ENCODE measurements at regions of chr2 and their contacts with region 1.

Region 1: GRCh38 chr2:64330281-64331113 is 123.5 kb upstream of the LGALSL start:
- DNase-seq: peak; percentile 80
- H3K4me3 Mint-ChIP-seq: no peak overlapping the region
- H3K27ac Mint-ChIP-seq: no peak overlapping the region
- H3K4me1 Mint-ChIP-seq: peaks cover 52% of the 10 kb centered on the region
- H3K27me3 Mint-ChIP-seq: peaks cover 5% of the 10 kb centered on the region

Region 2: DNA sequence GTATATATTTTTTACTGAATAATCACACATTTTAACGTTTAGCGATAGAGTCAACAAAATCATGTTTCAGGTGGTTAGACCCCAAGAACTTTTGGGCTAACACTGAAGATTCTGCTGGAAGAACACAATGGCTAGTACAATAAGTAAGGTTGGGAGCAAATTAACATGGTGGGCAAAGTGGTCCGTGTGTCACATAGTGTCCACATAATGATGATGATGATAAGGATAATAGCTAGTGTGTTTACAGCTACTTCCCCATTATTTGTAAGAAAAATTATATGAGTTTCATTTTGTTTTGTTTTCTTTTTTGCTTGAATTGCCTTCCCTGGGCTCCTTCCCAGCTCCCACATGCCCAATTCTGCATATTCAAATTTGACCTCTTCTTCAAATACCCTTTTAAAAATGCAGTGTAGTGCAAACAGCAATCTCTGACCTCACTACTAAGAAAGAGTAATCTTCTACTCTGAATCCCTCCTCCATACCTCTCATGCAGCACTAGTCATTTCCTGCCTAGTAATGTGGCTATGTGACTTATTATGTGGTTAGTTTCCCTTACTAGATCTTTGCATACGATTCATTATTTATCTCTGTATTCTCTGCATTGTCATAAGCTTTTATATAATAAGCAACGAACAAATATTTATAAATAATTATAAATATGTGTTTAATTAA is 294.3 kb before region 1 on chr2:
- CTCF ChIA-PET with region 1: interaction called, 6 read pairs
- POLR2A ChIA-PET with region 1: interaction called, 15 read pairs
- DNase-seq: peak; percentile 25
- H3K4me3 Mint-ChIP-seq: peak overlapping the region; percentile 44
- H3K27ac Mint-ChIP-seq: peak overlapping the region; percentile 92
- H3K4me1 Mint-ChIP-seq: peaks cover 54% of the 10 kb centered on the region
- H3K27me3 Mint-ChIP-seq: no peaks in the 10 kb centered on the region

Region 3: DNA sequence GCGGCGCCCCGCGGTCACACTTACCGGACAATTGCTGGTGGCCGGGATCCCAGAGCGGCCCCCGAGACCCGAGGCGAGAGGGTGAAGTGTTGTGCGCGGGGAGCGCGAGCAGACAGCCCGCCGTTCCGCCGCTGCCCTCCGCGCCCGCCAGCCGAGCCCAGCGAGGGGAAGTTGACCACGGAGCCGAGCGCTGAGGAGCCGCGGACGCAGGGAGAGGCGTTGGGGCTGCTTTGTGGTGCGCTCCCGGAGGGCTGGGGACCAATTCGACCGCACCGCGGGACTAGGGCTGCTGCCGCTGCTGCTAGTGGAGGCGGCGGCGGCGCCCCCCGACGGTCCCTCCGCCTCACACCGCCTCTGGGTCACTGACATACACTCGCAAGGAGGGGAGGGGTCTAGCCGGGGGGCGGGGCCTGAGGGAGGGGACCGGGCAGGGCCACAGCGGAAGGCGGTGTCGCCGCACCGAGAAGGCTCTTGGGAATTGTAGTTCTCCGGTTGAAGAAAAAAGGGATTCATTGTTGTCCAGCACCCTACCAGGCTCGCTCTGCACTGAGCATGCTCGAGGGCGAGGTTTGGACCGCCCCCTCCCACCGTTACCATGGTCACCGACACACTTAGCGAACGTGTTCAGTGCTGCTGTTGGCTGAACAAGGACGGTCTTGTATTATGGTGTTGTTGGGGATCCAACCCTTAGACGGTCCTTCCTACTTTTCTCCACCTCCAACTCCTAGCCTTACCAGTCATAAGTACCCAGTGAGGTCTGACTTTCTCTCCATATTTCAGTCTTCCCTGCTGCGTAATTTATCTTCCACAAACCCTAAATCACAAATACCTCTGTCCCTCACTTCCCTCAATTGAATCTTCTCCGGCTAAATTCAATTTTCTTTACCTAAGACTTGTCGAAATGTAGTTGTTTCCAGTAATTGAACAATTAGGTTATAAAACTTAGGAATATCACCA is 186.2 kb before region 1 on chr2 and contains the start of gene PELI1:
- CTCF ChIA-PET with region 1: interaction called, 11 read pairs
- POLR2A ChIA-PET with region 1: interaction called, 51 read pairs
- DNase-seq: peak; percentile 96
- H3K4me3 Mint-ChIP-seq: peak within 1 kb of the TSS; percentile 91
- H3K27ac Mint-ChIP-seq: peak within 1 kb of the TSS; percentile 88
- H3K4me1 Mint-ChIP-seq: peaks cover 24% of the 10 kb centered on the region
- H3K27me3 Mint-ChIP-seq: no peaks in the 10 kb centered on the region
- total RNA-seq, gene PELI1: 44.9 to 45.0 TPM

Region 4: GRCh38 chr2:64273524-64274398 is 56.7 kb before region 1 on chr2:
- CTCF ChIA-PET with region 1: no interaction called
- POLR2A ChIA-PET with region 1: no interaction called
- DNase-seq: no peak
- H3K4me3 Mint-ChIP-seq: no peak overlapping the region
- H3K27ac Mint-ChIP-seq: no peak overlapping the region
- H3K4me1 Mint-ChIP-seq: peaks cover 26% of the 10 kb centered on the region
- H3K27me3 Mint-ChIP-seq: no peaks in the 10 kb centered on the region

Region 5: DNA sequence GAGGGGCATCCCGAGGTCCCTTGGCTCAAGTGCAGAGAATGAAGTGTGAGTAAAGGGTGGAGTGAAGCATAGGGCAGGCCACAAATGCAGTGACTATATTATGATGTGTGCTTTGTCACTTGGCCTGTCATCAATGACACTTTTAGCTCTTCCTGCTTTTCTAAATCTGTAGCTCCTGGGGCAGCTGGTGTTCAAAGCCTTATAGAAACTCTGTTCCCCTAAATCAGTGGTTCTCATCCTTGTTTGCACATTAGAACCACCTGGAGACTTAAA is 12.1 kb before region 1 on chr2:
- CTCF ChIA-PET with region 1: interaction called, 15 read pairs
- POLR2A ChIA-PET with region 1: interaction called, 5 read pairs
- DNase-seq: no peak
- H3K4me3 Mint-ChIP-seq: no peak overlapping the region
- H3K27ac Mint-ChIP-seq: no peak overlapping the region
- H3K4me1 Mint-ChIP-seq: no peaks in the 10 kb centered on the region
- H3K27me3 Mint-ChIP-seq: peaks cover 27% of the 10 kb centered on the region

Region 6: GRCh38 chr2:64562148-64562784 is 231.8 kb after region 1 on chr2:
- CTCF ChIA-PET with region 1: interaction called, 38 read pairs
- POLR2A ChIA-PET with region 1: no interaction called
- DNase-seq: no peak
- H3K4me3 Mint-ChIP-seq: no peak overlapping the region
- H3K27ac Mint-ChIP-seq: peak overlapping the region; percentile 13
- H3K4me1 Mint-ChIP-seq: peaks cover 37% of the 10 kb centered on the region
- H3K27me3 Mint-ChIP-seq: no peaks in the 10 kb centered on the region

Region 7: DNA sequence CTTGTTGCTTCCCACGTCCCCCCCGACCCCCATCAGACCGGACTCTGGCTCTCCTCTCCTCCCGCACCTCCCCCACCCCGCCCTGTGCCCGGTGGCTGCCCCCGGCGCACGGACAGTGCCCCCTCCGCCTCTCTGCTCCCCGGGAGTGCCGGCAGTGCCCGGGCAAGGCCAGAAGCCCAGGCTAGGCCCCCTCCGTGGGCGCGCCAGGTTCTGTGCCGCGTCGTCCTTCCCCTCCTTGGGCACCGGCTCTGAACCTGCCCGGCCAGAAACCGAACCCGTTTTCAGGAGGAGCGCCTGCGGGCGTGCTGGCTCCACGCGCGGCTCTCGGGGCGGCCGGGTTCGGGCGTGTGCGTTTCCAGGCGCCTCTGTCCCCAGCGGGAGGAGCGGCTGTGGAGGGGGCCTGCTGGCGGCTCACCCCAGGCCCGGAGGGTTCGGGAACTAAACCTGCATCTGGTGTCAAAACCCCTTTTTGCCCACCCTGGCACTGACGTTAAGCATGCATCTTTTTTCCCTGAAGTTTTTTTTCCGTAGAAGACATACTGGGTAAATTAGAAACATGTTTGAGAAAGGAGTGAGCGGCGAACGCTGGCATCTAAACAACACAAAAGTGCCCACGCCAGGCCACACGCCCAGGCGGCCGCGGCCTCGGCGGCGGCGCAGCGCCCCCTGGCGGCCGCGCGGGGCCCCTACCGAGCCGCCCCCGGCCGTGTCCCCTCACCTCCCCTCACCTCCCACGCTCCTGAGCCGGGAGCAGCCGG is 534.8 kb after region 1 on chr2:
- CTCF ChIA-PET with region 1: interaction called, 15 read pairs
- POLR2A ChIA-PET with region 1: no interaction called
- DNase-seq: peak; percentile 69
- H3K4me3 Mint-ChIP-seq: peak overlapping the region; percentile 66
- H3K27ac Mint-ChIP-seq: no peak overlapping the region
- H3K4me1 Mint-ChIP-seq: peaks cover 1% of the 10 kb centered on the region
- H3K27me3 Mint-ChIP-seq: peaks cover 8% of the 10 kb centered on the region

Measured in activated CD4-positive, alpha-beta memory T cell treated with anti-CD3 and anti-CD28 coated beads, Interleukin-2, amount 10 ng/mL, durations not matched to agents 7 days and 5 days (primary cell).